ENCODE measurements at regions of chr13 and their contacts with region 1.

Region 1: DNA sequence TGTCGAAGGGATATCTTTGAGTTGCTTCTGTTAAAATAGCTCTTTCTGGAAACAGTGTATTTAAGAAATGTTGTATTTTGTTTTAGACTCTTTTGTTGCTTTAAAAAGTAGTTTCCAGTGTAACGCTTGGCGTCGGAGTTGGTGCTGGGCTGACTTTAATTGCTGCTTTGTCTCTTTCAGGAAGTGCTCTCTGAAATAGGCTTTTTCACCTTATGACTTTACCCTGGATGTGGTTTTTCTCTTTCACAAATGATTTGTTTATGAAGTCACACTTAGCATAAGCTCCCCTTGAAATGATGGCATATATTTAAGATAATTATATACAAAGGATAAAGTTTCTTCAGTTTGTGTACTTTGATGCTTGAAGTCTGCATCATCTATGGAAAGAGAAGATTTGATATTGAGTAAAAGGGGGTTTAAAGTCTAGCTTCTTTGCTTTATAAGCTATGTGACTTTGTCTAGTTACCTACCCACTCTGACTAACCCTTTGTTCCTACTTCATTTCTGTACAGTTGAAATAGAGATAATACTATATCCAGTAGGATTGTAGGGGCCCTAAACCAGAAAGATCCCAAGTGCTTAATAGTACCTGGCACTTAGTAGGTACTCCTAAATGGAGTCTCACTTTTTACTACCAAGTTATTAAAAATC is at the start of gene GPR18:
- DNase-seq: peak in 7 of 9 donors; percentile 56 to 81 (median 70)
- ATAC-seq: peak; percentile 89
- H3K4me3 ChIP-seq: peak within 1 kb of the TSS; percentile 86
- H3K4me3 Mint-ChIP-seq: peak within 1 kb of the TSS; percentile 86 to 99 (median 94)
- H3K27ac ChIP-seq: peak within 1 kb of the TSS; percentile 81
- H3K27ac Mint-ChIP-seq: peak within 1 kb of the TSS; percentile 90 to 97 (median 95)
- H3K4me1 ChIP-seq: peaks cover 27 to 40% of the 10 kb centered on the region in 2 donors
- H3K4me1 Mint-ChIP-seq: peaks cover 30 to 80% (median 66%) of the 10 kb centered on the region in 7 donors
- H3K27me3 ChIP-seq: no peaks in the 10 kb centered on the region
- H3K27me3 Mint-ChIP-seq: no peaks in the 10 kb centered on the region
- total RNA-seq, gene GPR18: 11.5 to 40.4 (median 21.1) TPM

Region 2: GRCh38 chr13:98775844-98776598 is 482.3 kb before region 1 on chr13:
- CTCF ChIA-PET with region 1: no interaction called
- POLR2A ChIA-PET with region 1: no interaction called
- intact Hi-C with region 1: no loop called
- DNase-seq: no peak
- ATAC-seq: no peak
- H3K4me3 ChIP-seq: no peak overlapping the region
- H3K4me3 Mint-ChIP-seq: no peak overlapping the region
- H3K27ac ChIP-seq: no peak overlapping the region
- H3K27ac Mint-ChIP-seq: no peak overlapping the region
- H3K4me1 ChIP-seq: no peaks in the 10 kb centered on the region
- H3K4me1 Mint-ChIP-seq: no peaks in the 10 kb centered on the region
- H3K27me3 ChIP-seq: no peaks in the 10 kb centered on the region
- H3K27me3 Mint-ChIP-seq: peaks cover 6 to 17% (median 9%) of the 10 kb centered on the region in 5 donors

Region 3: GRCh38 chr13:99057310-99057975 is 200.9 kb before region 1 on chr13:
- CTCF ChIA-PET with region 1: no interaction called
- POLR2A ChIA-PET with region 1: no interaction called
- intact Hi-C with region 1: loop called in 1 of 2 experiments (anchors 5 kb)
- DNase-seq: no peak
- ATAC-seq: no peak
- H3K4me3 ChIP-seq: no peak overlapping the region
- H3K4me3 Mint-ChIP-seq: peak overlapping the region in 2 of 10 donors; percentile 8 to 50
- H3K27ac ChIP-seq: no peak overlapping the region
- H3K27ac Mint-ChIP-seq: peak overlapping the region in 8 of 9 donors; percentile 7 to 96 (median 74)
- H3K4me1 ChIP-seq: peaks cover 28 to 78% of the 10 kb centered on the region in 2 donors
- H3K4me1 Mint-ChIP-seq: peaks cover 46 to 99% (median 94%) of the 10 kb centered on the region in 7 donors
- H3K27me3 ChIP-seq: no peaks in the 10 kb centered on the region
- H3K27me3 Mint-ChIP-seq: peaks cover 0 to 19% (median 0%) of the 10 kb centered on the region in 5 donors

Region 4: GRCh38 chr13:99074324-99075092 is 183.8 kb before region 1 on chr13:
- CTCF ChIA-PET with region 1: no interaction called
- POLR2A ChIA-PET with region 1: no interaction called
- intact Hi-C with region 1: no loop called
- DNase-seq: no peak
- ATAC-seq: no peak
- H3K4me3 ChIP-seq: no peak overlapping the region
- H3K4me3 Mint-ChIP-seq: peak overlapping the region in 3 of 10 donors; percentile 30 to 52 (median 37)
- H3K27ac ChIP-seq: no peak overlapping the region
- H3K27ac Mint-ChIP-seq: peak overlapping the region in 4 of 9 donors; percentile 41 to 84 (median 66)
- H3K4me1 ChIP-seq: peaks cover 27 to 39% of the 10 kb centered on the region in 2 donors
- H3K4me1 Mint-ChIP-seq: peaks cover 36 to 95% (median 87%) of the 10 kb centered on the region in 7 donors
- H3K27me3 ChIP-seq: no peaks in the 10 kb centered on the region
- H3K27me3 Mint-ChIP-seq: no peaks in the 10 kb centered on the region

Region 5: DNA sequence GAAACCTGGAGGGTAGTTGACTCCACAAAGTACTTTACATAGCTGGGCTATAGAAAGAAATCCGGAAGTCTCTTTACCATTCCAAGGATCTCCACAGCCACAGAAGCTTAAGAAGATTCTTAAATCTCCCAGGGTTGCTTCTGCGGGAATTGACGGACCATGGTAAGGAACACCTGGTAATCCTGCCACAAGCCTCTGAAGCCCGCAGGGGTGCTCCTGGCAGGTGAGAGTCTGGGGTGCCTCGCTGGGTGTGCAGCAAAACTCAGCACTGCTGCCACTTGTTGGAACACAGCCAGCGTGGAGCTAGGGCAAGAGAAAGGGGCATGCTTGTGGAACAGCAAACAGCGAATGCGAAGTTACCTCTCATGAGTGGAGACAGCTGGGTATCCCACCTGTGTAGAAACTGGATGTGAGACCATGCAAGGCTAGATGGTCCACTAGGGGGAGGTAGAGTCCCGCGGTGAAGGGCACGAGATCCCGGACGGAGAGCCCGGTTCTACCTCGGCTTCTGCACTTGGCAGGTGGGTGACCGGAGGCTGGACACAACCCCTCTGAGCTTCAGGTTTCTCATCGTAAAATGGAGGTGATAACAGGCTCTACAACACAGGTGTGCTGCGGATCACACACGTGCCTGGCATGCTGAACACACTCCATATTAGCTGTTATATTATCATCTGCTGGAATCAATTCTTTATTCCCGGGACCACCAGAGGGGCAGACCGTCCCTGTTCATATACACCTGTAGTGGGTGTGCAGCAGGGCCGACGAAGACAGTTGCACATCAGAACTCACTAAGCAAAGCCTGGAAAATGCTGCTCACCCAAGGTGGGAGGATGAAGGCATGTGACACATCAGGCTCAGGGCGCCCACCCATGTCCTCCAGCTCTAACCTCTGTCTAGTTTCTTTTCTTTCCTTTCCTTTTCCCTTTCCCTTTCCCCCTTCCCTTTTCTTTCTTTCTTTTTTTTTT is 81.7 kb before region 1 on chr13:
- CTCF ChIA-PET with region 1: interaction called, 232 read pairs
- POLR2A ChIA-PET with region 1: interaction called, 9 read pairs
- intact Hi-C with region 1: no loop called
- DNase-seq: peak; percentile 54 to 79 (median 71)
- ATAC-seq: peak; percentile 95
- H3K4me3 ChIP-seq: peak overlapping the region; percentile 1
- H3K4me3 Mint-ChIP-seq: peak overlapping the region; percentile 39 to 81 (median 72)
- H3K27ac ChIP-seq: no peak overlapping the region
- H3K27ac Mint-ChIP-seq: peak overlapping the region in 8 of 9 donors; percentile 34 to 77 (median 54)
- H3K4me1 ChIP-seq: peaks cover 22 to 24% of the 10 kb centered on the region in 2 donors
- H3K4me1 Mint-ChIP-seq: peaks cover 26 to 44% (median 39%) of the 10 kb centered on the region in 7 donors
- H3K27me3 ChIP-seq: no peaks in the 10 kb centered on the region
- H3K27me3 Mint-ChIP-seq: peaks cover 0 to 13% (median 0%) of the 10 kb centered on the region in 5 donors

Region 6: GRCh38 chr13:99214232-99214631 is 44.1 kb before region 1 on chr13:
- CTCF ChIA-PET with region 1: interaction called, 4 read pairs
- POLR2A ChIA-PET with region 1: interaction called, 97 read pairs
- intact Hi-C with region 1: loop called (anchors 1 kb)
- DNase-seq: peak in 4 of 9 donors; percentile 34 to 53 (median 46)
- ATAC-seq: no peak
- H3K4me3 ChIP-seq: peak overlapping the region; percentile 53
- H3K4me3 Mint-ChIP-seq: peak overlapping the region; percentile 69 to 95 (median 92)
- H3K27ac ChIP-seq: peak overlapping the region; percentile 85
- H3K27ac Mint-ChIP-seq: peak overlapping the region; percentile 94 to 100 (median 99)
- H3K4me1 ChIP-seq: peaks cover 46 to 67% of the 10 kb centered on the region in 2 donors
- H3K4me1 Mint-ChIP-seq: peaks cover 49 to 93% (median 79%) of the 10 kb centered on the region in 7 donors
- H3K27me3 ChIP-seq: no peaks in the 10 kb centered on the region
- H3K27me3 Mint-ChIP-seq: no peaks in the 10 kb centered on the region

Region 7: GRCh38 chr13:99237981-99238662 is 20.2 kb before region 1 on chr13:
- CTCF ChIA-PET with region 1: interaction called, 4 read pairs
- POLR2A ChIA-PET with region 1: interaction called, 23 read pairs
- intact Hi-C with region 1: loop called (anchors 1 kb)
- DNase-seq: peak in 4 of 9 donors; percentile 19 to 40 (median 30)
- ATAC-seq: peak; percentile 74
- H3K4me3 ChIP-seq: peak overlapping the region; percentile 26
- H3K4me3 Mint-ChIP-seq: peak overlapping the region; percentile 74 to 95 (median 85)
- H3K27ac ChIP-seq: peak overlapping the region; percentile 81
- H3K27ac Mint-ChIP-seq: peak overlapping the region; percentile 86 to 100 (median 97)
- H3K4me1 ChIP-seq: peaks cover 11 to 20% of the 10 kb centered on the region in 2 donors
- H3K4me1 Mint-ChIP-seq: peaks cover 35 to 81% (median 72%) of the 10 kb centered on the region in 7 donors
- H3K27me3 ChIP-seq: no peaks in the 10 kb centered on the region
- H3K27me3 Mint-ChIP-seq: no peaks in the 10 kb centered on the region

Region 8: GRCh38 chr13:99246100-99246499 is 12.2 kb before region 1 on chr13:
- CTCF ChIA-PET with region 1: interaction called, 4 read pairs
- POLR2A ChIA-PET with region 1: interaction called, 23 read pairs
- intact Hi-C with region 1: loop called (anchors 1 kb)
- DNase-seq: no peak
- ATAC-seq: no peak
- H3K4me3 ChIP-seq: no peak overlapping the region
- H3K4me3 Mint-ChIP-seq: no peak overlapping the region
- H3K27ac ChIP-seq: peak overlapping the region; percentile 2
- H3K27ac Mint-ChIP-seq: peak overlapping the region in 8 of 9 donors; percentile 19 to 85 (median 66)
- H3K4me1 ChIP-seq: peaks cover 0 to 4% of the 10 kb centered on the region in 2 donors
- H3K4me1 Mint-ChIP-seq: peaks cover 15 to 51% (median 45%) of the 10 kb centered on the region in 7 donors
- H3K27me3 ChIP-seq: no peaks in the 10 kb centered on the region
- H3K27me3 Mint-ChIP-seq: no peaks in the 10 kb centered on the region

Region 9: DNA sequence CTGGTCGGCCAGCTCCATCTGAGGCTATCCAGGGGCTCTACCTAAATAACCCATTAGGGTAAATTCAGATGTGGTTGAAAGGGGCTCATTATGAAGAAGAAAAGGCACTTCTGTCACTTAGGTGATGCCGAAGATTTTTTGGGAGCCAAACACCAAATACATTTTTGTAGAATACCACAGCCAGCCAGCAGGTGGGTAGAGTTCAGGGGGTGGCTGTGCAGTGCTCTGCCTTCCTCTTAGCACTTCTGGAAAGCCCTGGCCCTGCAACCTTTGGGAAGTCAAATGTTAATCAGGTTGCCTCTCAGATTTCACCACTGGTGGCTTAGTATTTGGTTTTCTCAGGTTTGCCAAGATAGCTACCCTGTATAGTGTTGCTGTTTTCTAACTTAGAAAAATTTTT is 18.4 kb after region 1 on chr13:
- CTCF ChIA-PET with region 1: no interaction called
- POLR2A ChIA-PET with region 1: no interaction called
- intact Hi-C with region 1: no loop called
- DNase-seq: no peak
- ATAC-seq: no peak
- H3K4me3 ChIP-seq: no peak overlapping the region
- H3K4me3 Mint-ChIP-seq: peak overlapping the region in 6 of 10 donors; percentile 6 to 76 (median 42)
- H3K27ac ChIP-seq: peak overlapping the region; percentile 38
- H3K27ac Mint-ChIP-seq: peak overlapping the region in 8 of 9 donors; percentile 27 to 94 (median 81)
- H3K4me1 ChIP-seq: peaks cover 64 to 86% of the 10 kb centered on the region in 2 donors
- H3K4me1 Mint-ChIP-seq: peaks cover 65 to 100% (median 96%) of the 10 kb centered on the region in 7 donors
- H3K27me3 ChIP-seq: no peaks in the 10 kb centered on the region
- H3K27me3 Mint-ChIP-seq: no peaks in the 10 kb centered on the region

Measured in naive thymus-derived CD4-positive, alpha-beta T cell (primary cell).